Posterior cingulate gyrus (tissue), 11 donors: ENCODE measurements at regions of chr19 and their contacts with region 1.

Region 1: GRCh38 chr19:5292822-5293611 is 47.6 kb downstream of the PTPRS start:
- DNase-seq: peak; percentile 47 to 95 (median 62)

Region 2: GRCh38 chr19:5205381-5205780 is 87.6 kb before region 1 on chr19:
- intact Hi-C with region 1: no loop called
- DNase-seq: peak in 1 of 10 donors; percentile 49

Region 3: GRCh38 chr19:5281588-5281987 is 11.4 kb before region 1 on chr19:
- intact Hi-C with region 1: no loop called
- DNase-seq: no peak

Region 4: GRCh38 chr19:5308471-5309437 is 15.7 kb after region 1 on chr19:
- intact Hi-C with region 1: loop called (anchors 2 kb)
- DNase-seq: peak; percentile 69 to 97 (median 76)

Region 5: DNA sequence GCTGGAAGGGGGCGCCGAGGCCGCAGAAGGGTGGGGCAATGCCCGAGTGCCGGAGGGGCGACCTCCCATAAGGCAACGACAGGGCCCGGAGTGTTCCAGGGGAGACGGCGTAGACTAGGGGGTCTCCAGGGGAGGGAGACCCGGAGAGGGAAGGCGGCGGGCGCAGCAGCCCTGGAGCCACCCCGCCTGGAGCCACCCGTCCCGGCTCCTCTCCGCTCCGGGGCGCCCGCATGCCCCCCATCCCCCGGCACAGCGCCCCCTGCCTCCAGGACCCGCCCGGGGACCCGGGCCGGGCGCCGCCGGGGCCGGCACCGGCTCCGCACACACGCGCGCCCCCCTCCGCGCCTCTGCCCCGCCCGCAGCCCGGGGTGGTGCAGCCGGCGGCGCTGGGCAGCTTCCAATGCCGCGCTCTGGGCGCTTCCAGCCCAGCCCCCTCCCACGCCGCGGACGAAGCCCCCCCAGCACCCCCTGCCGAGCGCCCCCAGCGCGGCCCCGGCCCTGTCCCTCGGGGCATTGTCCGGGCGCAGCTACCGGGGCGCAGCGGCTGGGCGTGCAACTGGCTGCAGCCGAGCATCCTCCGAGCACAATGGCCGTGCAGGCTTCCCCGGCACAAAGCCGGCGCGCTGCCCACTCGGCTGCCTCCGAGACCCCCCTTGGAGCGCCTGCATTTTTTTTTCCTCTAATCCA is 47.1 kb after region 1 on chr19:
- intact Hi-C with region 1: loop called (anchors 5 kb)
- DNase-seq: peak in 3 of 10 donors; percentile 36 to 91 (median 56)